Activated CD4-positive, alpha-beta T cell treated with anti-CD3 and anti-CD28 coated beads for 36 hours (primary cell): ENCODE measurements at regions of chr10 and their contacts with region 1.

Region 1: GRCh38 chr10:96497391-96497790 is 16.3 kb downstream of the TLL2 start:
- DNase-seq: no peak
- ATAC-seq: no peak
- H3K4me3 Mint-ChIP-seq: no peak overlapping the region
- H3K27ac Mint-ChIP-seq: no peak overlapping the region
- H3K4me1 Mint-ChIP-seq: no peaks in the 10 kb centered on the region
- H3K27me3 Mint-ChIP-seq: peaks cover 13% of the 10 kb centered on the region

Region 2: DNA sequence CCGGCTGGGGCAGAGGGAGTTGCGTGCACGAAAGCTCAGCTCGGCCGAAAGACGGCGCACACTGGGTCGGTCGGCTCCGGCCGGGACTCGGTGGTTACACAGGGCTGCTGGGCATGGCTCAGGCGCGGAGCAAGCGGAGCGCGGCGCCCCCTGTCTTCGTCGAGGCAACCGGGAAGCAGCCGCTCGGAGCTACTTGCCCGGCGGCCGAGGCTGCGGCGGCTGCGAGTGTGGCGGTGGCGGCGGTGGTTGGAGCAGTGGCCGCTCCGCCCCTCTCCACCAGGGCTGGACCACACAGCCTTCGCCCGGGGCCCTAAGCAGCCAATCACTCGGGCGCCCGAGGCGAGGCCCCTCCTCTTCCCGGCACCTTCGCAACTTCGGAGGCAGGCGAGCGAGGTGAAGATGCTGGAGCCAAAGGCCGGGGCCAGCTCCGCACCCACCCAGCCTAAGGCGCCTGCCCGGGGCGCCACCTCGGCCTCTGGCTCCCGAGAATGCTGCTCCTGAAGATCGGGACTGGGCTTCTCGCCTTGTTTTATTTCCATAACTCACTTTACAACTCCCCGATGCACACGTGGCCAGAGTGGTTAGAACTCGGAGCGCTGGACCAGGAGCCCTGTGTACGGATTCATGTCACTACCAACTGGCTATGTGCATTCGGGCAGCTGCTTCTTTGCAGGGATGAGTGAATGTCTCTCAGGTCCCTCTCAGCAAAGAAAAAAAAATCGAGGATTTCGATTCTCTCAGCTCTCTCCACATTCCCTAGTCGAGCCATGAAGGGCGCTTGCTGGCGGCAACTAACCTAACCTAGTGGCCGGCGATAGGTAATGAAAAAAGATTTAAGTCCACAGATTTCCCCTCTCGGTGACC is 16.5 kb after region 1 on chr10 and contains the start of gene TLL2:
- CTCF ChIA-PET with region 1: interaction called, 11 read pairs
- POLR2A ChIA-PET with region 1: no interaction called
- intact Hi-C with region 1: no loop called
- DNase-seq: peak; percentile 80
- ATAC-seq: peak; percentile 87
- H3K4me3 Mint-ChIP-seq: peak within 1 kb of the TSS; percentile 57
- H3K27ac Mint-ChIP-seq: no peak within 1 kb of the TSS
- H3K4me1 Mint-ChIP-seq: peaks cover 10% of the 10 kb centered on the region
- H3K27me3 Mint-ChIP-seq: peaks cover 43% of the 10 kb centered on the region
- total RNA-seq, gene TLL2: 0.02 TPM in 1 of 2 experiments, not detected in the other